Endothelial cell of umbilical vein (primary cell): ENCODE measurements at regions of chrX and their contacts with region 1.

Region 1: GRCh38 chrX:11143931-11144678 is 33.0 kb downstream of the HCCS start:
- DNase-seq: peak; percentile 75
- H3K4me3 ChIP-seq: no peak overlapping the region
- H3K27ac ChIP-seq: no peak overlapping the region
- H3K4me1 ChIP-seq: no peaks in the 10 kb centered on the region
- H3K27me3 ChIP-seq: no peaks in the 10 kb centered on the region
- CTCF ChIP-seq: peak; percentile 31 to 32
- POLR2A ChIP-seq: no peak

Region 2: GRCh38 chrX:11309220-11309619 is 165.1 kb after region 1 on chrX:
- CTCF ChIA-PET with region 1: no interaction called
- POLR2A ChIA-PET with region 1: no interaction called
- dilution Hi-C with region 1: no loop called
- intact Hi-C with region 1: no loop called
- DNase-seq: no peak
- H3K4me3 ChIP-seq: no peak overlapping the region
- H3K27ac ChIP-seq: no peak overlapping the region
- H3K4me1 ChIP-seq: no peaks in the 10 kb centered on the region
- H3K27me3 ChIP-seq: no peaks in the 10 kb centered on the region
- CTCF ChIP-seq: no peak
- POLR2A ChIP-seq: no peak

Region 3: DNA sequence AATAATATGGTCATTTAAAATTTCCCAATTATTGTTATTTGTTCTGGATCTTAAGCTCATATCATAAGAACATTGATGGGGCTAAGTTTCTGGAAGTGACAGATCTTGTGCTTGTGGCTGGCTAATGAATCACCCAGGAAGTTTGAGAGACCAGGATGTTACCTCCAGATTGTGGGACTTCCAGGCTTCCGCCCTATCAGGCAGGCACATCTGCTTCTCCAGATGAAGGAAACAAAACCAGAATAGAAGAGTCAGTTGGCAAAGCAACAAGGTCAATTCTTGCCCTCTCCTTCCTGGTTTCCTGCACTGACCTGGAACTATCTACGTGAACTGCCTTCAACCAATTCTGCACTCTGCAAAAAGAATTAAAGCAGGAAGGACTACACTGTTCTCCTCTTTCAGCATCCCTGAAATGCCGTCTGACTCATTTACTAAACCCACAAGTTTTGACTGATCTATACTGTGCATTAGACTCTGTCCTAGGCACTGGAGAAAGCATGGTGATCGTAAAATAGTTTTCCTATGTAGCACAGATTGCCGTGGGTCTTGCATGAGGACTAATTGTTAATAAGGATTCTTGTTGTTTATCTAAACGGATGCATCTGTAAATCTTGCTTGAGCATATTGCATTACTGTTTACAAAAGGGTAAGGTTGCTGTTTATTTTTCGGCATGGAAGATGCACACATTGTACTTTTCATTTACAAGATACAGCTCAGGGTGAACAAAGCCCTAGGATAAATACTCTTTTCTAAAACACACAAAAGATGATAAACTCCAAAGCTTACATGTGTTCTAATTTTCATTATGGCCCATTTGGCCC is 223.7 kb after region 1 on chrX:
- CTCF ChIA-PET with region 1: no interaction called
- POLR2A ChIA-PET with region 1: no interaction called
- dilution Hi-C with region 1: no loop called
- intact Hi-C with region 1: loop called (anchors 5 kb)
- DNase-seq: peak; percentile 55
- H3K4me3 ChIP-seq: no peak overlapping the region
- H3K27ac ChIP-seq: peak overlapping the region; percentile 47
- H3K4me1 ChIP-seq: peaks cover 14% of the 10 kb centered on the region
- H3K27me3 ChIP-seq: no peaks in the 10 kb centered on the region
- CTCF ChIP-seq: no peak
- POLR2A ChIP-seq: no peak

Region 4: DNA sequence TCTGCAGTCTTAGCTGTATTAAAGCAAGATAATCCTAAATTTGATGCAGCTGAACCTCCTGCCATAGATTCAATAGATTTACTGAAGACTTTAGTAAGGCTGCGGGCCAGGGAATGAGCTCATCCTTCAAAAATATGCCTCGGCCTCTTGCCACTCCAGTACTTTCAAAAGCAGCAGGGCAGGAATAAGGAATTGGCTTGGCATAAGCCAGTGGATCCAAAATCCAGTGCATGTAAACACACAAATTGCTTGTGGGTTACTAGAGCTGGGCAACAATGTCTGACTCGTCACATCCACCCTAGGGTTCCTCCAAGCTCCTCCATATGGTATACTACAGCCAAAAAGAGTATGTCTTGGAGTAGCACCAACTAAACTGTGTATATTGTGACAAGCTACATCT is 314.1 kb after region 1 on chrX:
- CTCF ChIA-PET with region 1: no interaction called
- POLR2A ChIA-PET with region 1: no interaction called
- dilution Hi-C with region 1: no loop called
- intact Hi-C with region 1: loop called (anchors 10 kb)
- DNase-seq: no peak
- H3K4me3 ChIP-seq: no peak overlapping the region
- H3K27ac ChIP-seq: no peak overlapping the region
- H3K4me1 ChIP-seq: no peaks in the 10 kb centered on the region
- H3K27me3 ChIP-seq: no peaks in the 10 kb centered on the region
- CTCF ChIP-seq: no peak
- POLR2A ChIP-seq: no peak

Region 5: GRCh38 chrX:11724122-11725017 is 580.3 kb after region 1 on chrX:
- CTCF ChIA-PET with region 1: no interaction called
- POLR2A ChIA-PET with region 1: no interaction called
- dilution Hi-C with region 1: no loop called
- intact Hi-C with region 1: loop called (anchors 1 kb)
- DNase-seq: peak; percentile 29
- H3K4me3 ChIP-seq: no peak overlapping the region
- H3K27ac ChIP-seq: no peak overlapping the region
- H3K4me1 ChIP-seq: no peaks in the 10 kb centered on the region
- H3K27me3 ChIP-seq: no peaks in the 10 kb centered on the region
- CTCF ChIP-seq: peak in 1 of 2 donors; percentile 48
- POLR2A ChIP-seq: no peak